ENCODE measurements at regions of chr11 and their contacts with region 1.

Region 1: DNA sequence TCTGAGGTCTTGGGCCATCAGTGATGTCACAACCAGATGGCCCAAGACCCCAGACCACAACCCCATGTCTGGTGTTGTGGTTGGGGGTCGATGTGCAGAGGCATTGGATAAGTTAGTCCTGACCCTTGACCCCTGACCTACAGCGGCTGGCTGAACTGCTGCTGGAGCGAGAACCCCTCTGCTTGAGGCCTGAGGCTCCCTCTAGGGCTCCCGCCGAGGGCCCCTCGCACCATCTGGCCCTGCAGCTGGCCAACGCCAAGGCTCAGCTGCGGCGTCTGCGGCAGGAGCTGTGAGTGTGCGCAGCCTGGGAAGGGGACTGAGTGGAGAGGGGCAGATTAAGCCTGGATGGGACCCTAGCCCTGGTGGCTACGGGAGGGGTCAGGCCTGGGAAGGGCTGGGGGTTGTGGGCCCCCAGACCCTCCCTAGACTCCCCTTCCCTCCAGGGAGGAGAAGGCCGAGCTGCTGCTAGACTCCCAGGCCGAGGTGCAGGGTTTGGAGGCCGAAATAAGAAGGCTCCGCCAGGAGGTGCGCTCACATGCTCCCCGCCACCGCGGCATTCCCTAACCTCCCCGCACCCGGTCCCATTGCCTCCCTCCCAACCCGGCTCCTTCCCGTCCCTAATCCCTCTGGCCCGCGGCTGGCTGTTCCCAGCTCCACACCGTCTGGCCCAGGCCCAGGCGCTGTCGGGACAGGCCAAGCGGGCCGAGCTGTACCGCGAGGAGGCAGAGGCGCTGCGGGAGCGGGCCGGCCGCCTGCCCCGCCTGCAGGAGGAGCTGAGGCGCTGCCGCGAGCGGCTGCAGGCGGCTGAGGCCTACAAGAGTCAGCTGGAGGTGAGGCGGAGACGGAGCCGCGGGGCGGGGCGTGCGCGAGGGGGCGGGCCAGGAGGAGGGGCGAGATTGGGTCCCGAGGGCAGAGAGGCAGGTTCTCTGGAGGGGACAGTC is 2.1 kb downstream of the CCDC88B start:
- DNase-seq: peak; percentile 86 to 99
- H3K4me3 ChIP-seq: peak overlapping the region; percentile 25 to 69 (median 34); a peak in 7 of 8 replicates
- H3K27ac ChIP-seq: no peak overlapping the region
- H3K4me1 ChIP-seq: peaks cover 0 to 23% (median 17%) of the 10 kb centered on the region in 4 experiments; a peak in 6 of 7 replicates
- H3K27me3 ChIP-seq: peaks cover 0 to 2% (median 0%) of the 10 kb centered on the region in 4 experiments; a peak in 1 of 7 replicates
- CTCF ChIP-seq: peak in 2 of 3 experiments; percentile 38 to 60; a peak in 3 of 4 replicates
- EP300 ChIP-seq: no peak
- POLR2A ChIP-seq: peak in 1 of 2 experiments; percentile 57; a peak in 2 of 3 replicates
- RAD21 ChIP-seq: peak; percentile 18 to 45; a peak in 3 of 4 replicates

Region 2: GRCh38 chr11:64317957-64318693 is 24.0 kb before region 1 on chr11 and contains the start of gene PRDX5:
- CTCF ChIA-PET with region 1: interaction called, 614 read pairs
- POLR2A ChIA-PET with region 1: interaction called, 38 read pairs
- DNase-seq: peak in 1 of 2 experiments; percentile 90
- H3K4me3 ChIP-seq: peak within 1 kb of the TSS; percentile 73 to 80 (median 77)
- H3K27ac ChIP-seq: peak within 1 kb of the TSS; percentile 91
- H3K4me1 ChIP-seq: peaks cover 1 to 12% (median 3%) of the 10 kb centered on the region in 4 experiments; a peak in 6 of 7 replicates
- H3K27me3 ChIP-seq: no peaks in the 10 kb centered on the region
- CTCF ChIP-seq: peak in 1 of 3 experiments; percentile 51; a peak in 2 of 4 replicates
- EP300 ChIP-seq: no peak
- POLR2A ChIP-seq: no peak
- RAD21 ChIP-seq: peak; percentile 39 to 62
- total RNA-seq, gene PRDX5: 201 and 225 TPM in 2 replicates

Region 3: DNA sequence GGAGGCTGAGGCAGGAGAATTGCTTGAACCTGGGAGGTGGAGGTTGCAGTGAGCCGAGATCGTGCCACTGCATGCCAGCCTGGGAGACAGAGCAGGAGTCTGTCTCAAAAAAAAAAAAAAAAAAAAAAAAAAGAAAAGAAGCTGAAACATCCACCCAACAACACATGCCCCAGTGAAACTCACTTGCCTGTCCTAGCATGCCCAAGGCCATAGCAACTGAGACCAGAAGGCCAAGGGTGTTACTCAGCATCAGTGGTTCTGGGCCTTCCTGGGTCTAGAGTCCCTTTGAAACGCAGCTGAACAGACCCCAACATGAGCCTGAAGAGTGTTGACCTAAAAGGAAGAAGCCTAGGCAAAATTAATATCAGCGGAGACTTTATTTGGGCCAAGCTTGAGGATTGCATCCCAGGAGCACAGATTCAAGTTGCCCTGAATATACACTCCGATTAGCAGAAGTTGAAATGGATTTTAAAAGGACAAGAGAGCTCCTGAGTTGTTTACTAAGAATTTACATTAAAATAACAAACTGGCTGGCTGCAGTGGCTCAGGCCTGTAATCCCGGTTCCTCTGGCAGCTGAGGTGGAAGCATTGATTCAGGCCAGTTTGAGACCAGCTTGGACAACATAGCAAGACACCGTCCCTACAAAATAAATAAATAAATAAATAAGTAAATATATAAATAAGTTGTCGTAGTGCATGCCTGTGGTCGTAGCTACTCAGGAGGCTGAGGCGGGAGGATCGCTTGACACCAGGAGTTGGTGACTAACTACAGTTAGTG is 17.2 kb before region 1 on chr11:
- CTCF ChIA-PET with region 1: interaction called, 614 read pairs
- POLR2A ChIA-PET with region 1: interaction called, 38 read pairs
- DNase-seq: no peak
- H3K4me3 ChIP-seq: no peak overlapping the region; a peak in 2 of 8 replicates
- H3K27ac ChIP-seq: peak overlapping the region; percentile 45; the same call in 1 of the 2 replicates
- H3K4me1 ChIP-seq: peaks cover 0 to 10% (median 4%) of the 10 kb centered on the region in 4 experiments; a peak in 4 of 7 replicates
- H3K27me3 ChIP-seq: no peaks in the 10 kb centered on the region
- CTCF ChIP-seq: no peak
- EP300 ChIP-seq: no peak
- POLR2A ChIP-seq: no peak
- RAD21 ChIP-seq: no peak

Region 4: DNA sequence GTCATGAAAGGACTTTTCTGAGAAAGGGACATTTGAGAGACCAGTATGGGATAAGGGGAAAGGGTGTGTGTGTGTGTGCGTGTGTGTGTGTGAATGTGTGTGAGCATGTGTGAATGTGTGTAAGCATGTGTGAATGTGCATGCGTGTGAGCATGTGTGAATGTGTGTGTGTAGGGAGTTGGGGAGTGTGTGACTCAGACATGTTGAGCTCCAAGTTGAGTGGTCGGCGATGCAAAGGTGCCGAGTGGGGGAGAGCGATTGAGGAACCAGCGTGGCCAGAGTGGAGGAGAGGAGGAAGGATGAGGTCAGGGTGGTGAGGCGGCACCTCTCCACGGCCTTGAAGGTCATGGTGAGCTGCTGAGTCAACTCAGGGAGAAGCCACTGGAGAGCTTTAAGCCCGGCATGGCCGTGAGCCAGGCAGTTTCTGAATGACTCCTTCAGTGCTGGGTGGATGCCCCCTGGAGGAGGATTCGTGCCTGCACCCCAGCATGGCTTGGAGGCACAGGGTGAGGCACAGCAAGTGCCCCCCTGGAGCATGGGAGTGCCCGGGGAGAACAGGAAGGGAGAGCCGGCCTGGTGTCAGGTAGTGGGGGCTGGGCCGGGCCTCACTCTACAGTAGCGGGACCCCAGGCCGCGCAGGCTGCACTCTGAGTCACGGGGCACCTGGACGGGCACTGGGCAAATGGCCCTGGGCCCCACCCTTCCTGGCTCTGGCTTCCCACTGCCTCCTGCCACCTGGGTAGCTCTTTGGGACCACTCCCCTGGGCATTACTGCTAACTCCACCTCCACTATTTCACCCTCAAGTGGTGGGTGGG is 10.4 kb before region 1 on chr11:
- CTCF ChIA-PET with region 1: interaction called, 409 read pairs
- POLR2A ChIA-PET with region 1: interaction called, 15 read pairs
- DNase-seq: peak in 1 of 2 experiments; percentile 76
- H3K4me3 ChIP-seq: no peak overlapping the region
- H3K27ac ChIP-seq: no peak overlapping the region
- H3K4me1 ChIP-seq: peaks cover 0 to 9% (median 4%) of the 10 kb centered on the region in 4 experiments; a peak in 6 of 7 replicates
- H3K27me3 ChIP-seq: no peaks in the 10 kb centered on the region
- CTCF ChIP-seq: peak; percentile 47 to 74 (median 71)
- EP300 ChIP-seq: no peak
- POLR2A ChIP-seq: no peak
- RAD21 ChIP-seq: peak; percentile 33 to 55; a peak in 2 of 4 replicates

Region 5: DNA sequence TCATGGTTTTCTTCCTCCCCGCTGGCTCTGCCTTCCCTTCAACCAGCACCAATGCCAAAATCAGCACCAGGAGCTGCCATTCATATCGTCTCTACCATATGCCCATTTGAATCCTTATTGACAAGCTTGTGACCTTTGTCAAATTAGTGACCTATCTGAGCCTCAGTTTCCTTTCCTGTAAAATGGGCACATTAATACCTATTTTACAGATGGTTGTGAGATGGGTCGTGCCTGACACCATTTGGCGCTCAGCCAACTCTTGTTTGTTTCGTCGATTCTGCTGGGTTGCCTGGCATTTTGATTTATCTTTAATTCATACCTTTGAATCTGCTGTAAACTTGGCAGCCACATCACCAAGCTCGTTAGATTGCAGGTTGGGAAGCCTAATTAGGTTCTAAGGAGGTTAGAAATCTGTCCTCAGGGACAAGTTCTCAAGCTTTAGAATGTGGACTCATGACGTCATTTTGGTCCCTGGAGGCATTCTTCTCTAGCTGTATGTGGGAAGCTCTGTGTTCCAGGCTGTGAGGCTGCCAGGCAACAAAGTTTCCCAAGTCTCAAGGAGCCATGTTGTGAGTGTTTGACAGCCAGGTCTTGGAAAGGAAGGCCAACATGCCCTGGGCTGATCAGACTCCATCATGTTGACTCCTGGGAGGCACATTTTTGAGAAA is 77.8 kb after region 1 on chr11:
- CTCF ChIA-PET with region 1: no interaction called
- POLR2A ChIA-PET with region 1: no interaction called
- DNase-seq: no peak
- H3K4me3 ChIP-seq: no peak overlapping the region
- H3K27ac ChIP-seq: no peak overlapping the region
- H3K4me1 ChIP-seq: peaks cover 1 to 4% (median 2%) of the 10 kb centered on the region in 4 experiments; a peak in 5 of 7 replicates
- H3K27me3 ChIP-seq: peaks cover 0 to 3% (median under 1%) of the 10 kb centered on the region in 4 experiments; a peak in 3 of 7 replicates
- CTCF ChIP-seq: no peak
- EP300 ChIP-seq: no peak
- POLR2A ChIP-seq: no peak
- RAD21 ChIP-seq: no peak